Dorsolateral prefrontal cortex (tissue), 120 donors: ENCODE measurements at regions of chr14 and their contacts with region 1.

Region 1: GRCh38 chr14:34009956-34010355 is 59.1 kb upstream of the EGLN3 start:
- DNase-seq: no peak
- H3K4me3 ChIP-seq: no peak overlapping the region
- H3K27ac ChIP-seq: no peak overlapping the region
- H3K27me3 ChIP-seq: no peaks in the 10 kb centered on the region
- CTCF ChIP-seq: no peak

Region 2: DNA sequence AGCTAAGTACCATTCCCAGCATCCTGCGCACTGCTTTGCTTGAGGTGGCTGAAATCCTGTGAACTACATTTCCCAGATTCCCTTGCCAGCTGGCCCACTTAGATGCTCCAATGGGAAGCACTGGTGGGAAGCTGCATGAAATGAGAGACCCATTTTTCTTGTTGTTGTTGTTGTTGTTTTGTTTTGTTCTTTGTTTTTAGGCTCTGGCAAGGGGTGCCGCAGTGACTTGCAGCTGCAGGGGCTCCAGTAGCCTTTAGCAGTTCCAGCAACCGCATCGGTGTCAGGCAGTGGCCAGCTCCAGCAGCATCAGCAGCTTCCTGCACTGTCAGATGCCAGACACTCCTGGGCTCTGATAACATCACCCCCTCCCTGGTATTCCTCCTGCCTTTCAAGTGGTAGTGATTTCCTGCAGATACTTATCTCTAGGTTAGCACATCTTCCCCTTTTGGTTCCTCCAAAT is 50.2 kb before region 1 on chr14:
- intact Hi-C with region 1: no loop called
- DNase-seq: peak; percentile 9 to 78 (median 61)
- H3K4me3 ChIP-seq: peak overlapping the region in 18 of 59 donors; percentile 9 to 41 (median 25)
- H3K27ac ChIP-seq: peak overlapping the region; percentile 24 to 94 (median 87)
- H3K27me3 ChIP-seq: peaks cover 0 to 33% (median 2%) of the 10 kb centered on the region in 45 donors
- CTCF ChIP-seq: peak in 2 of 56 donors; percentile 15 to 22

Region 3: DNA sequence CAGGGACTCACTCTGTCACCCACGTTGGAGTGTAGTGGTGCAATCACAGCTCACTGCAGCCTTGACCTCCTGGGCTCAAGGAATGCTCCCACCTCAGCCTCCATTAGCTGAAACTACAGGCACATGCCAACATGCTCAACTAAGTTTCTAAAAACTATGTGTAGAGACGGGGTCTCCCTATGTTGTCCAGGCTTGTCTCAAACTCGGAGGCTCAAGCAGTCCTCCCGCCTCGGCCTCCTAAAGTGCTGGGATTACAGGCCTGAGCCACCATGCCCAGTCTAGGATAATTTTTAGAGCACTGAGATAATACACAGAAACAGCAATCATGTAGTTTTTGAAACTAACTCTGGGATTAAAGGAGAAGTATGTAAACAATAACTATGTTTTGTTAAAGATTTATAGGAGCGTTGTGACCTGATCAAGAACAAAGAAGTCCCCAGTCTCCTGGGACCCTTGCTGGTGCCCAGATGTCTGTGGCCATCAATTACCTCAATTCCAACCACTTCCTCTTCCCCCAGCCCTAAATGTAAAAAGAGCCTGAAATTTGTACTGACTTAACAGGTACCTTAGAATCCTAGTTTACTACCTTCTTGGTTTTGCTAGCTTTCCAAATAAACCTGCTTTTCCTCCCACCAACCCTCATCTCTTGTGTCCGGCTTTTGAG is 30.2 kb before region 1 on chr14:
- intact Hi-C with region 1: loop called in 1 of 2 experiments (anchors 1 kb)
- DNase-seq: no peak
- H3K4me3 ChIP-seq: no peak overlapping the region
- H3K27ac ChIP-seq: no peak overlapping the region
- H3K27me3 ChIP-seq: peaks cover 0 to 7% (median 0%) of the 10 kb centered on the region in 45 donors
- CTCF ChIP-seq: no peak